Heart right ventricle (tissue), 16 donors: ENCODE measurements at regions of chr11 and their contacts with region 1.

Region 1: DNA sequence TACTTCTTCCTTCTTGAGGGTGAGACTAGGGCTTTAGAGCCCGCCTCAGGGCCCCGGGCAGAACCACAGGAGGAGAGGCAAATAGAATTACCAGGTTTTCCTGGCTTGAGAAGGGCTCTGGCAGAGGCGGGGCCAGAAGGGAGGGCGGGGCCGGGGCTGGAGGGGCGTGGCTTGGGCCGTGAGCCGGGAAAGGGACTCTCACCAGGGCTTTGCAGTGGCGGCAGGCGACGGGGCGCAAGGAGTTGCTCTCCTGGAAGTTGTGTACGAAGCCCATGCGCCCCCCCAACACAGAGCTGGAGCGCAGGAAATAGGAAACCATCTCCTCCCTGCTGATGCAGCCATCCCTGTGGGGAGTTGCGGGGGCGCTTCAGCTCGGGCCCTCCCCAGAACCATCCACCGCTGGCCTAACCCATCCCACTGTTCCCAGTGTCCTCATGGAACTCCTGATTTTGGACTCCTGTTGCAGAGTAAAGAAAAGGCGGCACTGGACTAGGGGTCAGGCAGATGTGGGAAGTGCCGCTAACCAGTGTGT is 6.9 kb upstream of the NRXN2 start:
- DNase-seq: peak in 1 of 2 donors; percentile 45
- ATAC-seq: peak in 7 of 8 donors; percentile 23 to 77 (median 49)
- H3K4me3 ChIP-seq: no peak overlapping the region
- H3K27ac ChIP-seq: no peak overlapping the region
- H3K4me1 ChIP-seq: peaks cover 0 to 4% (median 0%) of the 10 kb centered on the region in 9 donors
- H3K27me3 ChIP-seq: no peaks in the 10 kb centered on the region
- CTCF ChIP-seq: no peak

Region 2: GRCh38 chr11:64688534-64688982 is 41.4 kb before region 1 on chr11:
- intact Hi-C with region 1: loop called in 2 of 10 experiments (anchors 2 to 5 kb)
- DNase-seq: peak; percentile 90 to 92
- ATAC-seq: peak; percentile 88 to 97 (median 94)
- H3K4me3 ChIP-seq: peak overlapping the region in 8 of 10 donors; percentile 24 to 60 (median 50)
- H3K27ac ChIP-seq: peak overlapping the region; percentile 8 to 83 (median 66)
- H3K4me1 ChIP-seq: peaks cover 5 to 28% (median 18%) of the 10 kb centered on the region in 9 donors
- H3K27me3 ChIP-seq: peaks cover 0 to 16% (median 10%) of the 10 kb centered on the region in 7 donors
- CTCF ChIP-seq: peak; percentile 89 to 98 (median 94)

Region 3: DNA sequence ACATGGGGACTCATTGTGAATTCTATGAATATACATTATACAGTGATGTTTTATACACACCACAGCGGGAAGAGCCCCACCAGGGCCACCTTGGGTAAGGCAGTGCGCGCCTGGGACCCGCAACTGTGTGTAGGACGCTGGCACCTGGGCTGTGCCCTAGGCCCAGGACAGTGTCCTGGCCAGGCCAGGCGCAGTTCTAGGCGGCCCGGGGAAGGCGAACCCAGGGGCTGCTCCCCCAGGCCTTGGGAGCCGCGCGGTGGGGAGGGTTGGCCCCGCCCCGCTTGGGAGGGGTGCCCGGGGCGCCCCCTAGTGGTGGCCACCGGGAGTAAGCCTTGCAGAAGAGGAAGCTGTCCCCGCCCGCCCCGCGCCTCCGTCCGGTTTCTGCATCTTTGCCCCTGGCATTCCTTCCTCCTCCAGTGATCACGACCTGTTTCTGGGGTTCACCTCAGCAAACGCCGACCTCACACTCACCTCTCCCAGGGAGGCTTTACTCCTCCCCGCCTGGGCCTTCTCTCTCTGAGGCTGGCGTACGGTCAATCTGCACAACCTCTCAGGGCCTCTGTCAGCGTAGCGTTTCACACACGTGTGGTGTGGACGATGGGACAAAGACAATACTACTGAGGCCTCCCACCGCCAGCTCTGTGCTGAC is 158.0 kb after region 1 on chr11:
- intact Hi-C with region 1: no loop called
- DNase-seq: peak; percentile 80 to 90
- ATAC-seq: peak; percentile 83 to 96 (median 92)
- H3K4me3 ChIP-seq: peak overlapping the region in 7 of 10 donors; percentile 21 to 42 (median 34)
- H3K27ac ChIP-seq: peak overlapping the region; percentile 10 to 83 (median 62)
- H3K4me1 ChIP-seq: peaks cover 9 to 45% (median 26%) of the 10 kb centered on the region in 9 donors
- H3K27me3 ChIP-seq: no peaks in the 10 kb centered on the region
- CTCF ChIP-seq: peak; percentile 98 to 100 (median 99)